ENCODE measurements at regions of chr1 and their contacts with region 1.

Region 1: DNA sequence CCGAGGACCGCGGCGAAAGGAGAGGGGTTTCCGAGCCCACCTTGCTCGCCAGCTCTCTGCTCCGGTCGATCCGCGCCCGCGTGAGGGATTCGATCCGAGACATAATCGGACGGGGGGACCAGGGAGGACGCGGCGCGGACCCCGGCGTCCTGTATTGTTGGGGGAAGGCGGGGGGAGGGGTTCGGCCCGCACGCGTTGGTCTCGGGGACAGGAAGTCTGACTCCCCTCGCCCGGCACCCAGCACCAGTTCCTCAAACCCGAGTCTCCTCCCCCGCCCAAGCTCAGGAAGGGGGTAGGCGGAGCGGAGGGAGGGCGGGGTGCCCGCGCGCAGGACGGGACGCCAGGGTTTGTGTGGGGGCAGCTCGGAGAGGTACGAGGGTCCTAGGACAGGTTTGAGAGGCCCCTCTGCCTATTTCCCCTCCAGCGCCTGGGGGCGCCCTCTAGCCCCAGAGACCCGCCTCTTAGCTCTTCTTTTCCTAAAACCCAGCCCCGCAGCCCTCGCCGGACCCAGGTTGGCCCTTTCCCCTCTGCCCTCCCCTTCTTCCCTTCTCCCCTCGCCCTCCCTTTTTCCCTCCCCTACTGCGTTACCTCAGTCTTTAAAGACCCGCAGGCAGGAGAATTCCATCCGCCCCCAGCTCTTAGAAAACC is at the start of gene ARHGEF2:
- DNase-seq: peak; percentile 49 to 81 (median 68)
- ATAC-seq: peak; percentile 78
- H3K4me3 ChIP-seq: peak within 1 kb of the TSS; percentile 74
- H3K4me3 Mint-ChIP-seq: peak within 1 kb of the TSS; percentile 89 to 98 (median 94)
- H3K27ac ChIP-seq: peak within 1 kb of the TSS; percentile 90
- H3K27ac Mint-ChIP-seq: peak within 1 kb of the TSS; percentile 77 to 98 (median 95)
- H3K4me1 ChIP-seq: peaks cover 55 to 58% of the 10 kb centered on the region in 2 donors
- H3K4me1 Mint-ChIP-seq: peaks cover 59 to 79% (median 69%) of the 10 kb centered on the region in 7 donors
- H3K27me3 ChIP-seq: no peaks in the 10 kb centered on the region
- H3K27me3 Mint-ChIP-seq: no peaks in the 10 kb centered on the region
- total RNA-seq, gene ARHGEF2: 108 to 236 (median 182) TPM

Region 2: DNA sequence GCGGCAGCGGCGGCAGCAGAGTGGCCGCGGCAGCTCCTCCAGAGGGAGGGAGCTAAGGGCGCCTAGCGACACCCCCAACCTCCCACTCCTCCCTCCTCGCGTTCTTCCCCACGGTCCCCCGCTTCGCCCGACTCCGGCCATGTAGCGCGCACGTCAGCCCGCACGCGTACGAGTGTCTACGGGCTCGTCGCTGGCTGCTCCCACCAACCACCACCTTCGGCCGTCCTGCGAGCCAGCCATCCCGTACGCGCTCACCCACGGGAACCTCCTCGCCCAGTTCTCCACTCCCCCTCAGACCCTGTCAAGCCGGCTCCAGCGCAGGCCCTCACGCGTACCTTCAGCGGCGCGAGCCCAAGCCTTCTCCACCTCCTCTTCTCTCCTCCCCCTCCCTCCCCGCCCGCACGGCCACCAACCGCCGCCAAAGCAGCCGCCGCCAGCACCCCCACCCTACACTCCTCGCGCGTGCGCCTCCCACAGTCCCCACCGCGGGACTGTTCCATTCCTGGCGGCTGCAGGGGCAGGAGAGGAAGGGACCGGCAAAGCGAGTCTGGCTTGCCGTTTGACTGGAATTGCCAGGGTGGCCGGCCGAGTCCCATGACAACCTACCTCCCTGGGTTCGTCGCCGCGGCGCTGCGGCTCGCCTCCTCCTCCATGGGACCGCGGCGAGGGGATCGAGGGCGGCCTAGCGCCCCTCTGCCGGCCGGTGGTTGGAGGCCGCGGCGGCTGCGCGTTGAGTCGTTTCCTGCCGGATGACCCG is 289.9 kb before region 1 on chr1 and contains the start of gene YY1AP1:
- CTCF ChIA-PET with region 1: no interaction called
- POLR2A ChIA-PET with region 1: no interaction called
- intact Hi-C with region 1: loop called in 1 of 2 experiments (anchors 5 kb)
- DNase-seq: peak; percentile 87 to 96 (median 92)
- ATAC-seq: peak; percentile 96
- H3K4me3 ChIP-seq: peak within 1 kb of the TSS; percentile 99
- H3K4me3 Mint-ChIP-seq: peak within 1 kb of the TSS; percentile 93 to 98 (median 96)
- H3K27ac ChIP-seq: peak within 1 kb of the TSS; percentile 91
- H3K27ac Mint-ChIP-seq: peak within 1 kb of the TSS; percentile 90 to 98 (median 96)
- H3K4me1 ChIP-seq: peaks cover 15 to 30% of the 10 kb centered on the region in 2 donors
- H3K4me1 Mint-ChIP-seq: peaks cover 37 to 81% (median 70%) of the 10 kb centered on the region in 7 donors
- H3K27me3 ChIP-seq: no peaks in the 10 kb centered on the region
- H3K27me3 Mint-ChIP-seq: no peaks in the 10 kb centered on the region
- total RNA-seq, gene YY1AP1: 81.2 to 130 (median 88.2) TPM

Region 3: GRCh38 chr1:155911156-155912055 is 67.0 kb before region 1 on chr1 and contains the start of gene RIT1:
- CTCF ChIA-PET with region 1: no interaction called
- POLR2A ChIA-PET with region 1: interaction called, 10 read pairs
- intact Hi-C with region 1: loop called (anchors 1 to 2 kb)
- DNase-seq: peak; percentile 68 to 85 (median 76)
- ATAC-seq: peak; percentile 99
- H3K4me3 ChIP-seq: peak within 1 kb of the TSS; percentile 73
- H3K4me3 Mint-ChIP-seq: peak within 1 kb of the TSS; percentile 85 to 99 (median 96)
- H3K27ac ChIP-seq: peak within 1 kb of the TSS; percentile 80
- H3K27ac Mint-ChIP-seq: peak within 1 kb of the TSS; percentile 90 to 99 (median 96)
- H3K4me1 ChIP-seq: peaks cover 5 to 17% of the 10 kb centered on the region in 2 donors
- H3K4me1 Mint-ChIP-seq: peaks cover 11 to 38% (median 21%) of the 10 kb centered on the region in 7 donors
- H3K27me3 ChIP-seq: no peaks in the 10 kb centered on the region
- H3K27me3 Mint-ChIP-seq: no peaks in the 10 kb centered on the region
- total RNA-seq, gene RIT1: 34.0 to 83.9 (median 41.4) TPM

Region 4: GRCh38 chr1:155946633-155947219 is 31.7 kb before region 1 on chr1:
- CTCF ChIA-PET with region 1: interaction called, 3 read pairs
- POLR2A ChIA-PET with region 1: interaction called, 66 read pairs
- intact Hi-C with region 1: loop called in 1 of 2 experiments (anchors 2 kb)
- DNase-seq: no peak
- ATAC-seq: no peak
- H3K4me3 ChIP-seq: no peak overlapping the region
- H3K4me3 Mint-ChIP-seq: peak overlapping the region in 9 of 10 donors; percentile 16 to 87 (median 63)
- H3K27ac ChIP-seq: peak overlapping the region; percentile 65
- H3K27ac Mint-ChIP-seq: peak overlapping the region; percentile 81 to 99 (median 89)
- H3K4me1 ChIP-seq: peaks cover 20 to 27% of the 10 kb centered on the region in 2 donors
- H3K4me1 Mint-ChIP-seq: peaks cover 28 to 54% (median 41%) of the 10 kb centered on the region in 7 donors
- H3K27me3 ChIP-seq: no peaks in the 10 kb centered on the region
- H3K27me3 Mint-ChIP-seq: no peaks in the 10 kb centered on the region

Region 5: DNA sequence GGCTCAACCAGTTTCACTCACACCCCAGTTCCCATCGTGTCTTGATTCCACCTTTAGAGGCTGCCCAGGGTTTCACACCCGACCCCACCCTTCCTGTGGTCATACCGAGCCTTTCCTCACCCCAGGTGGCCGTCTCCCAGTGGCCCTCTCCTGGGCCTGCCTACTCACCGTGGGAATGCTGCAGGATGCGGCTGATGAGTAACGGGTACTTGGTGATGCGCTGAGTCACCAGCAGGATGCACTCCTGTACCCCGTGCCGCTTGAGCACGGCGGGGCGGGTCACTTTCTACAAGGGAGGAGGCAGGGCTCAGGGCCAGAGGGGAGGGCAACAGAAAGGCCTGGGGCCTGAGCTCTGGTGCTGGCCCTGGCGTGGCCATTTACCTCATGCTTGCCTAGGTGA is 16.5 kb before region 1 on chr1:
- CTCF ChIA-PET with region 1: interaction called, 39 read pairs
- POLR2A ChIA-PET with region 1: interaction called, 144 read pairs
- intact Hi-C with region 1: loop called in 1 of 2 experiments (anchors 1 kb)
- DNase-seq: no peak
- ATAC-seq: peak; percentile 84
- H3K4me3 ChIP-seq: no peak overlapping the region
- H3K4me3 Mint-ChIP-seq: no peak overlapping the region
- H3K27ac ChIP-seq: no peak overlapping the region
- H3K27ac Mint-ChIP-seq: peak overlapping the region in 5 of 9 donors; percentile 37 to 86 (median 63)
- H3K4me1 ChIP-seq: peaks cover 5 to 9% of the 10 kb centered on the region in 2 donors
- H3K4me1 Mint-ChIP-seq: peaks cover 12 to 40% (median 20%) of the 10 kb centered on the region in 7 donors
- H3K27me3 ChIP-seq: no peaks in the 10 kb centered on the region
- H3K27me3 Mint-ChIP-seq: no peaks in the 10 kb centered on the region

Region 6: DNA sequence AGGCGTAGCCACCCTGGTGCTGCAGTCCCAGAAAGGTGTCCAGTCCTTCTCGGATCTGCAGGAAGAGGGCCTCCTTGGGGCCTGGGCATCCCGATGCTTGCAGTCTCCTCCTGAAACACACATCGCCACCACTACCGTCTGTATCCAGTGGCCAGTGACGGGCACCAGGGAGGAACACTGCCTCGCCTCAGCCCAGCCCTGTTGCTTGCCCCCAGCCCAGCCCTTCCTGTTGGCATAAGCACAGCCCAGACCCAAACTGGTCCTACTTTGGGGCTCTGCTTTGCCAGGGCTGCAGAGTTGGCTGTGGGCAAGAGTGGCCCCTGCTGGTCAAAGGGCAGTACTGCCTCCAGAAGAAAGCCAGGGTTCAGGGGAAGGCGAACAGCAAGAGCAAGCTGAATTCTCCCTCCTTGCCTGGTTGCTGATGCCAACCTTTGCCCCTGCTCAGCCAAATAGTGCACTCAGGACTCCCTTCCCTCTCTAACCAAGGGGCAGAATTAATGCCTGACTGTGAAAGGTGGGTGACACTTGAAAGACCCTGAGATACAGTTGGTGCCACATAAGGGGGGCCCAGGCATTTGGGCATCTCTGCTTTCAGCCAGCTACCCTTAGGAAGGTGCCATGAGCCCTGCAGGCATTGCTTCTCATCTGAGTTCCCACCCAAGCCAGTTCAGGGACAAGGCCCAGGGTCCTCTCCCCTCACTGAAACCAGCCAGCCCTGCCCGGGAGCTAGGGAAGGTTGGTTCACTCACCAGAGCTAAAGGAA is 11.0 kb after region 1 on chr1:
- CTCF ChIA-PET with region 1: interaction called, 21 read pairs
- POLR2A ChIA-PET with region 1: interaction called, 144 read pairs
- intact Hi-C with region 1: loop called (anchors 1 to 2 kb)
- DNase-seq: peak; percentile 69 to 86 (median 79)
- ATAC-seq: peak; percentile 94
- H3K4me3 ChIP-seq: no peak overlapping the region
- H3K4me3 Mint-ChIP-seq: peak overlapping the region in 2 of 10 donors; percentile 21 to 30
- H3K27ac ChIP-seq: no peak overlapping the region
- H3K27ac Mint-ChIP-seq: peak overlapping the region in 4 of 9 donors; percentile 9 to 73 (median 42)
- H3K4me1 ChIP-seq: peaks cover 10% of the 10 kb centered on the region in 2 donors
- H3K4me1 Mint-ChIP-seq: peaks cover 4 to 17% (median 11%) of the 10 kb centered on the region in 7 donors
- H3K27me3 ChIP-seq: no peaks in the 10 kb centered on the region
- H3K27me3 Mint-ChIP-seq: no peaks in the 10 kb centered on the region

Region 7: GRCh38 chr1:156020292-156021089 is 42.0 kb after region 1 on chr1 and contains the start of gene SSR2:
- CTCF ChIA-PET with region 1: no interaction called
- POLR2A ChIA-PET with region 1: interaction called, 5 read pairs
- intact Hi-C with region 1: loop called (anchors 2 kb)
- DNase-seq: peak; percentile 44 to 91 (median 84)
- ATAC-seq: peak; percentile 99
- H3K4me3 ChIP-seq: peak within 1 kb of the TSS; percentile 87
- H3K4me3 Mint-ChIP-seq: peak within 1 kb of the TSS; percentile 87 to 99 (median 96)
- H3K27ac ChIP-seq: peak within 1 kb of the TSS; percentile 74
- H3K27ac Mint-ChIP-seq: peak within 1 kb of the TSS; percentile 89 to 99 (median 95)
- H3K4me1 ChIP-seq: peaks cover 4 to 9% of the 10 kb centered on the region in 2 donors
- H3K4me1 Mint-ChIP-seq: peaks cover 20 to 47% (median 41%) of the 10 kb centered on the region in 7 donors
- H3K27me3 ChIP-seq: no peaks in the 10 kb centered on the region
- H3K27me3 Mint-ChIP-seq: peaks cover 0 to 12% (median 0%) of the 10 kb centered on the region in 5 donors
- total RNA-seq, gene SSR2: 207 to 278 (median 256) TPM